Activated CD4-positive, alpha-beta T cell treated with anti-CD3 and anti-CD28 coated beads, Interleukin-2, amount 10 ng/mL, durations not matched to agents 24 days and 14 days (primary cell): ENCODE measurements at regions of chr9 and their contacts with region 1.

Region 1: GRCh38 chr9:19102631-19103345 is at the start of gene HAUS6:
- DNase-seq: peak; percentile 98
- H3K4me3 Mint-ChIP-seq: peak within 1 kb of the TSS; percentile 87
- H3K27ac Mint-ChIP-seq: peak within 1 kb of the TSS; percentile 93
- H3K4me1 Mint-ChIP-seq: peaks cover 19% of the 10 kb centered on the region
- H3K27me3 Mint-ChIP-seq: no peaks in the 10 kb centered on the region
- total RNA-seq, gene HAUS6: 32.2 and 34.3 TPM in 2 replicates

Region 2: DNA sequence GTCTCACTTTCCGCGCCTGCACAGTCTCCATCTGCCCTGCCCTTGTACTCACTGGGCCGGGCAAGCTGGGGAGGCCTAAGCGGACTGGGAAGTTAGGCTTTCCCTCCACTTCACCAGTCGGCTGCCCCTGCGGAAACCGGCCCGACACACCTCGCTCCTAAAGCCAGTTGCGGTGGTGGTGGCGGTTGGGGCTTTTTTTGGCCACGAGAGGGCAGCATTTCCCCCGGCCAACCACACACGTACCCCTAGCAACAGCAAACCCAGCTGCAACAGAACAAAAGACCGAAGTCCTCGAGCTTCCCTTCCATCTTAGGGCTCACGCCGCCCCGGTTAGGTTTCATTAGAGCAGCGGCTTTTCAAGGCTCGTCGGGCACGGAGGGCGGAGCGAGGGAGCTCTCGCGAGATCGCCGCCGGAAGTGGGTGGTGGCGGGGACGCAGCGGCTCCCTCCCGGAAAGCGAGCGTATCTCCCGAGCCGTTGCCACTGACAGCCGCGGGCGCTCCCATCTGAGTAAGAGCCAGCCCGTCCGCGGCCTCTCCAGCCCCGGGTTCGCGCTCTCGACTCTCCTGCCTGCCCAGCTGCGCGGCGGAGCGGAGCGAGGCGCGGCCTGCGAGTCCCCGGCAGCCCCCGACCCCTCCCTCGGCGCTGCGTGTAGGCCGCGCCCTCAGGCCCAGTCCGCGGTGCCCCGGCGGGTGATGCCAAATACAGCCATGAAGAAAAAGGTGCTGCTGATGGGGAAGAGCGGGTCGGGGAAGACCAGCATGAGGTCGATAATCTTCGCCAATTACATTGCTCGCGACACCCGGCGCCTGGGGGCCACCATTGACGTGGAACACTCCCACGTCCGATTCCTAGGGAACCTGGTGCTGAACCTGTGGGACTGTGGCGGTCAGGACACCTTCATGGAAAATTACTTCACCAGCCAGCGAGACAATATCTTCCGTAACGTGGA is 53.5 kb before region 1 on chr9 and contains the start of gene RRAGA:
- intact Hi-C with region 1: loop called (anchors 1 kb)
- DNase-seq: peak; percentile 99
- H3K4me3 Mint-ChIP-seq: peak within 1 kb of the TSS; percentile 95
- H3K27ac Mint-ChIP-seq: peak within 1 kb of the TSS; percentile 99
- H3K4me1 Mint-ChIP-seq: peaks cover 32% of the 10 kb centered on the region
- H3K27me3 Mint-ChIP-seq: no peaks in the 10 kb centered on the region
- total RNA-seq, gene RRAGA: 54.1 and 54.3 TPM in 2 replicates

Region 3: DNA sequence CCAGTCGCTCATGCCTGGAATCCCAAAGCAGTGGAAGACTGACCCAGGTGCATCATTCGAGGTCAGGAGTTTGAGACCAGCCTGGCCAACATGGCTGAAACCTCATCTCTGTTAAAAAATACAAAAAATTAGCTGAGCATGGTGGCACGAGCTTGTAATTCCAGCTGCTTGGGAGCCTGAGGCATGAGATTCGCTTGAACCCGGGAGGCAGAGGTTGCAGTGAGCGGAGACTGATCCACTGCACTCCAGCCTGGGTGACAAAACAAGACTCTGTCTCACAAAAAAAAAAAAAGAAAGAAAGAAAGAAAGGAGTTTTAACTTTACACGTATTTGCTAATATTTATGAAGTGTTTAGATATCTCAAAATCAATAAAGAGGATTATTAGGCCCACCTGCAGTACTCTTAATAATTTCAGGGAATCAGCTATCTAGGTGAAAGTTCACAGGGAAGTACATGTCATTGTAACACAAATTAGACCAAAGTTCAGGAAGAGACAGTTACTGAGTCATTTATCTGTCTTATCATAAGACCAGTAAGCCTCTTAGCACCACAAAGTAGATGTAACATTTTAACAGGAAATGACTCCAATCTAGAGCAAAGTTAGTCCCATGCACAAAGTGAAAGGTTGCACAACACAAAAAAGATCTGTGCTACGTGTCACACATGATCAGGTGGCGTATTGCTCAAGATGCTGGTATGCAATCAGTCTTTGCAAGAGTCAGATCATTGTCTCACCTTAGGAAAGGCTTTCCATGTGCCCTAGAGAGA is 58.7 kb after region 1 on chr9:
- intact Hi-C with region 1: loop called (anchors 1 kb)
- DNase-seq: peak; percentile 86
- H3K4me3 Mint-ChIP-seq: peak overlapping the region; percentile 67
- H3K27ac Mint-ChIP-seq: peak overlapping the region; percentile 89
- H3K4me1 Mint-ChIP-seq: peaks cover 24% of the 10 kb centered on the region
- H3K27me3 Mint-ChIP-seq: no peaks in the 10 kb centered on the region

Region 4: DNA sequence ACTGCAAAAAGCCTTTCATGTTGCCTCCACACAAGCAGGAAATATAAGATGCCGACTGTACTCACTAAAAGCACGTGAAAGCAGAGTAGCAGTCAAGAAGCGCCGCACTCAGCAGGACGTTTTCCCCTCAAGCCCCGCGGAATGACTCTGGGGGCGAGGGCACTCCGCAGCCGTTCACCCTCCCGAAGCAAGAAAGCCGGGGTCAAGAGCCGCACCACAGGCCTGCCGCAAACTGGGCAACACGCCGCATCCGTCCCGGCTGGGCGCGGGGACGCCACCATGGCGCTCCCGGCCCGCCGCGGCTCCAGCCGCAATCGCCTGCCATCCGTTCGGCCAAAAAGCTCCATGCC is 276.9 kb after region 1 on chr9:
- intact Hi-C with region 1: loop called (anchors 1 kb)
- DNase-seq: no peak
- H3K4me3 Mint-ChIP-seq: peak overlapping the region; percentile 95
- H3K27ac Mint-ChIP-seq: peak overlapping the region; percentile 95
- H3K4me1 Mint-ChIP-seq: peaks cover 45% of the 10 kb centered on the region
- H3K27me3 Mint-ChIP-seq: no peaks in the 10 kb centered on the region

Region 5: GRCh38 chr9:19456996-19457692 is 354.4 kb after region 1 on chr9:
- intact Hi-C with region 1: loop called (anchors 2 kb)
- DNase-seq: peak; percentile 91
- H3K4me3 Mint-ChIP-seq: peak overlapping the region; percentile 59
- H3K27ac Mint-ChIP-seq: no peak overlapping the region
- H3K4me1 Mint-ChIP-seq: peaks cover 10% of the 10 kb centered on the region
- H3K27me3 Mint-ChIP-seq: peaks cover 3% of the 10 kb centered on the region